ENCODE measurements at regions of chr5 and their contacts with region 1.

Region 1: GRCh38 chr5:15995341-15996052 is 184.1 kb downstream of the MARCHF11 start:
- DNase-seq: peak; percentile 55
- ATAC-seq: peak; percentile 86
- H3K4me3 ChIP-seq: no peak overlapping the region
- H3K27ac ChIP-seq: no peak overlapping the region
- H3K4me1 ChIP-seq: no peaks in the 10 kb centered on the region; the same call in 1 of the 2 replicates
- H3K27me3 ChIP-seq: peaks cover 7% of the 10 kb centered on the region; the same call in 1 of the 2 replicates
- CTCF ChIP-seq: peak; percentile 75
- POLR2A ChIP-seq: no peak
- RAD21 ChIP-seq: peak; percentile 86

Region 2: GRCh38 chr5:15003511-15003920 is 992.0 kb before region 1 on chr5:
- CTCF ChIA-PET with region 1: no interaction called
- POLR2A ChIA-PET with region 1: no interaction called
- dilution Hi-C with region 1: no loop called
- in situ Hi-C with region 1: no loop called
- intact Hi-C with region 1: loop called (anchors 5 kb)
- DNase-seq: peak; percentile 75
- ATAC-seq: peak; percentile 88
- H3K4me3 ChIP-seq: no peak overlapping the region
- H3K27ac ChIP-seq: no peak overlapping the region
- H3K4me1 ChIP-seq: peaks cover 3% of the 10 kb centered on the region; the same call in 1 of the 2 replicates
- H3K27me3 ChIP-seq: peaks cover 9% of the 10 kb centered on the region; the same call in 1 of the 2 replicates
- CTCF ChIP-seq: peak; percentile 91
- POLR2A ChIP-seq: no peak
- RAD21 ChIP-seq: peak; percentile 92

Region 3: GRCh38 chr5:15105796-15106393 is 889.6 kb before region 1 on chr5:
- CTCF ChIA-PET with region 1: no interaction called
- POLR2A ChIA-PET with region 1: no interaction called
- dilution Hi-C with region 1: no loop called
- in situ Hi-C with region 1: loop called (anchors 10 kb)
- intact Hi-C with region 1: loop called (anchors 1 kb)
- DNase-seq: peak; percentile 54
- ATAC-seq: peak; percentile 90
- H3K4me3 ChIP-seq: no peak overlapping the region
- H3K27ac ChIP-seq: no peak overlapping the region
- H3K4me1 ChIP-seq: no peaks in the 10 kb centered on the region
- H3K27me3 ChIP-seq: peaks cover 5% of the 10 kb centered on the region; the same call in 1 of the 2 replicates
- CTCF ChIP-seq: peak; percentile 68
- POLR2A ChIP-seq: no peak
- RAD21 ChIP-seq: peak; percentile 62

Region 4: DNA sequence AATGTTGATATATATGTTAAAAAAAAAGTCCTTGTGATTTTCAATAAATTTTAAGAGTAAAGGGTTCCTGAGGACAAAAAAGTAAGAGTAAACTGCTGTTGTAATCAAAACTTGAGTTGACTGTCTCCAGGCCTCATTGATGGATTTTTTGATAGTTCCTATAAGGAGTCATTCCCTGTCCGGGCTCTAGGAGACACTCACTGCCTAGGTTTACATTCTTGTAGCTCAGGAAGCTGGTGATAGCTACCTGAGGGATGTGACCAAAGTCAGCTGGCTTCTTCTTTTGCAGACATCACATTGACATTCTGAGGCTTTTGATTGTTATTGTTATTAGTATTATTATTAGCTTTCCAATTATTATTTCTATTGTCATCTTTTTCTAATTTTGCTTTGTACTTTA is 612.0 kb before region 1 on chr5:
- CTCF ChIA-PET with region 1: interaction called, 5 read pairs
- POLR2A ChIA-PET with region 1: no interaction called
- dilution Hi-C with region 1: no loop called
- in situ Hi-C with region 1: no loop called
- intact Hi-C with region 1: loop called (anchors 5 kb)
- DNase-seq: peak; percentile 28
- ATAC-seq: 0 out of 2 replicates have a peak, but pooled peaks have one; percentile 40
- H3K4me3 ChIP-seq: no peak overlapping the region
- H3K27ac ChIP-seq: no peak overlapping the region
- H3K4me1 ChIP-seq: no peaks in the 10 kb centered on the region
- H3K27me3 ChIP-seq: peaks cover 3% of the 10 kb centered on the region
- CTCF ChIP-seq: peak; percentile 55
- POLR2A ChIP-seq: no peak
- RAD21 ChIP-seq: peak; percentile 71

Region 5: GRCh38 chr5:15499528-15500324 is 495.8 kb before region 1 on chr5 and contains the start of gene FBXL7:
- CTCF ChIA-PET with region 1: interaction called, 3 read pairs
- POLR2A ChIA-PET with region 1: no interaction called
- dilution Hi-C with region 1: no loop called
- in situ Hi-C with region 1: no loop called
- intact Hi-C with region 1: loop called (anchors 2 kb)
- DNase-seq: peak; percentile 75
- ATAC-seq: peak; percentile 85
- H3K4me3 ChIP-seq: peak within 1 kb of the TSS; percentile 97
- H3K27ac ChIP-seq: peak within 1 kb of the TSS; percentile 40
- H3K4me1 ChIP-seq: peaks cover 2% of the 10 kb centered on the region; the same call in 1 of the 2 replicates
- H3K27me3 ChIP-seq: peaks cover 7% of the 10 kb centered on the region
- CTCF ChIP-seq: peak; percentile 39
- POLR2A ChIP-seq: peak; percentile 73
- RAD21 ChIP-seq: peak; percentile 47
- total RNA-seq, gene FBXL7: 4.1 and 4.4 TPM in 2 replicates

Region 6: GRCh38 chr5:15752663-15753285 is 242.7 kb before region 1 on chr5:
- CTCF ChIA-PET with region 1: no interaction called
- POLR2A ChIA-PET with region 1: no interaction called
- dilution Hi-C with region 1: no loop called
- in situ Hi-C with region 1: no loop called
- intact Hi-C with region 1: loop called (anchors 5 kb)
- DNase-seq: peak; percentile 51
- ATAC-seq: peak; percentile 88
- H3K4me3 ChIP-seq: peak overlapping the region; percentile 50
- H3K27ac ChIP-seq: 0 out of 2 replicates have a peak overlapping the region, but pooled peaks have one; percentile 36
- H3K4me1 ChIP-seq: no peaks in the 10 kb centered on the region
- H3K27me3 ChIP-seq: no peaks in the 10 kb centered on the region
- CTCF ChIP-seq: no peak
- POLR2A ChIP-seq: no peak
- RAD21 ChIP-seq: no peak

Region 7: GRCh38 chr5:15821506-15821905 is 174.0 kb before region 1 on chr5:
- CTCF ChIA-PET with region 1: interaction called, 8 read pairs
- POLR2A ChIA-PET with region 1: no interaction called
- dilution Hi-C with region 1: no loop called
- in situ Hi-C with region 1: no loop called
- intact Hi-C with region 1: loop called (anchors 2 kb)
- DNase-seq: peak; percentile 65
- ATAC-seq: peak; percentile 86
- H3K4me3 ChIP-seq: no peak overlapping the region
- H3K27ac ChIP-seq: no peak overlapping the region
- H3K4me1 ChIP-seq: peaks cover 9% of the 10 kb centered on the region
- H3K27me3 ChIP-seq: no peaks in the 10 kb centered on the region
- CTCF ChIP-seq: no peak
- POLR2A ChIP-seq: no peak
- RAD21 ChIP-seq: no peak

Region 8: DNA sequence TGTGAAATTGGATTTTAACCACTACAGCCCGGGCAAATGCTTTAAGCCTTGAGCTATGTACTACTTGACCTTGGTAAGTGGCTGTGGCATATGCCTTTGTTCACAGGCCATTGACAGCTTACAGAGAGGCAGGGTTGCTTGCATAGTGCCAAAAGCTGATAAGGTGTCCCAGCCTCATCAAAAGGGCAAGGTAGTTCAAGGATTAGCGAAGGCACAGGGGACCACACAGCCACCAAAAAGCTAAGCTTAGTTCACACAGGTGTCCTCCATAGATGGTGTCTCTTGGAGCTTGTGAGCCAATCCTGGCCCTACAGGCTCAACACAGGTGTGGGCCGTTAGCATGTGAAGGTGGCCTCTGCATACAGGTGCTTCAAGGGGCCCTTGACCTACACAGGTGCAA is 383.3 kb after region 1 on chr5:
- CTCF ChIA-PET with region 1: no interaction called
- POLR2A ChIA-PET with region 1: no interaction called
- dilution Hi-C with region 1: no loop called
- in situ Hi-C with region 1: no loop called
- intact Hi-C with region 1: no loop called
- DNase-seq: no peak
- ATAC-seq: no peak
- H3K4me3 ChIP-seq: no peak overlapping the region
- H3K27ac ChIP-seq: no peak overlapping the region
- H3K4me1 ChIP-seq: no peaks in the 10 kb centered on the region
- H3K27me3 ChIP-seq: no peaks in the 10 kb centered on the region
- CTCF ChIP-seq: no peak
- POLR2A ChIP-seq: no peak
- RAD21 ChIP-seq: no peak